ENCODE measurements at regions of chr2 and their contacts with region 1.

Region 1: GRCh38 chr2:118003396-118003824 is 10.5 kb downstream of the CCDC93 start:
- DNase-seq: peak; percentile 64

Region 2: GRCh38 chr2:117814417-117815264 is 188.8 kb before region 1 on chr2 and contains the start of gene DDX18:
- CTCF ChIA-PET with region 1: interaction called, 18 read pairs
- POLR2A ChIA-PET with region 1: interaction called, 7 read pairs
- DNase-seq: peak; percentile 87

Region 3: GRCh38 chr2:117987121-117987520 is 16.3 kb before region 1 on chr2:
- CTCF ChIA-PET with region 1: interaction called, 29 read pairs
- POLR2A ChIA-PET with region 1: interaction called, 3 read pairs
- DNase-seq: no peak

Region 4: GRCh38 chr2:118013724-118014491 is 10.5 kb after region 1 on chr2 and contains the start of gene CCDC93:
- CTCF ChIA-PET with region 1: interaction called, 16 read pairs
- POLR2A ChIA-PET with region 1: no interaction called
- DNase-seq: peak; percentile 98

Measured in HEK293T (cell line).